ENCODE measurements at regions of chr11 and their contacts with region 1.

Region 1: GRCh38 chr11:93652161-93652597 is 9.3 kb upstream of the CEP295 start:
- DNase-seq: peak; percentile 64
- H3K4me3 Mint-ChIP-seq: no peak overlapping the region
- H3K27ac Mint-ChIP-seq: no peak overlapping the region
- H3K4me1 Mint-ChIP-seq: peaks cover 6% of the 10 kb centered on the region
- H3K27me3 Mint-ChIP-seq: peaks cover 50% of the 10 kb centered on the region
- CTCF ChIP-seq: peak; percentile 59

Region 2: GRCh38 chr11:93324500-93324899 is 327.7 kb before region 1 on chr11:
- CTCF ChIA-PET with region 1: no interaction called
- POLR2A ChIA-PET with region 1: no interaction called
- intact Hi-C with region 1: no loop called
- DNase-seq: no peak
- H3K4me3 Mint-ChIP-seq: no peak overlapping the region
- H3K27ac Mint-ChIP-seq: no peak overlapping the region
- H3K4me1 Mint-ChIP-seq: no peaks in the 10 kb centered on the region
- H3K27me3 Mint-ChIP-seq: no peaks in the 10 kb centered on the region
- CTCF ChIP-seq: no peak

Region 3: GRCh38 chr11:93481701-93482100 is 170.5 kb before region 1 on chr11:
- CTCF ChIA-PET with region 1: interaction called, 5 read pairs
- POLR2A ChIA-PET with region 1: interaction called, 3 read pairs
- intact Hi-C with region 1: loop called (anchors 5 kb)
- DNase-seq: peak; percentile 51
- H3K4me3 Mint-ChIP-seq: no peak overlapping the region
- H3K27ac Mint-ChIP-seq: no peak overlapping the region
- H3K4me1 Mint-ChIP-seq: peaks cover 9% of the 10 kb centered on the region
- H3K27me3 Mint-ChIP-seq: no peaks in the 10 kb centered on the region
- CTCF ChIP-seq: no peak

Region 4: DNA sequence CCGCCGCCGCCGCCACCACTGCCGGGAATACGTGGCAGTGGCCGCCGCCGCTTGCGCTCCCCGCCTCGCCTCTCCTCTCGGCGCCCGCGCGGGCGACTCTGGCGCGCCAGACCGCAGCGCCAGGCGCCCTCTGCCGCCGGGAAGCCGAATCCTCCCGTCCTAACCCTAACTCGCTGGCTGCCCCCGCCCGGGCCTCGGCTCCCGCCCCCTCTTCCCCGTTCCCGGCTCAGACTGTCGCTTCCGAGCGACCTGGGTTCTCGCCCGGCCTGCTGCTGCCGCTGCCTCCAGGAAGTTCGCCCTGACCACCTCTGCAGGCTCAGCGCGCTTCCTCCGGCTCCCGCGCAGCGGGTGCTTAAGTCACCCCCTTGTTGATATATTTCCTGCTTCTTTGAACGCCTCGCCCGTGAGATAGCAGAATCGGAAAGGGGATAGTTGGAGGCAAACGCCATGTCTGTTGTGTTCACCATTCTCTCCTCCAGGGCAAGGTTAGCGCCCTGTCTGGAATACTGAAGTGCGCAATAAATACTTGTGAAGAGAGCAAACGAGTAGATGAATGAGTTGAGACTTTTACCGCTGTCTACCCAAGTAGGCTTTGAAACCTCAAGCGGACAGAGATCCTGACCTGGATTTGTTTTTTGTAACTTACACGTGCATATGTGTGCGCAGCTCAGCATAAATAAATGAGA is 108.7 kb before region 1 on chr11 and contains the start of gene SMCO4:
- CTCF ChIA-PET with region 1: interaction called, 13 read pairs
- POLR2A ChIA-PET with region 1: no interaction called
- intact Hi-C with region 1: loop called (anchors 2 kb)
- DNase-seq: peak; percentile 79
- H3K4me3 Mint-ChIP-seq: peak within 1 kb of the TSS; percentile 79
- H3K27ac Mint-ChIP-seq: peak within 1 kb of the TSS; percentile 57
- H3K4me1 Mint-ChIP-seq: peaks cover 8% of the 10 kb centered on the region
- H3K27me3 Mint-ChIP-seq: peaks cover 11% of the 10 kb centered on the region
- CTCF ChIP-seq: peak; percentile 78
- total RNA-seq, gene SMCO4: 8.5 and 10.0 TPM in 2 replicates

Region 5: DNA sequence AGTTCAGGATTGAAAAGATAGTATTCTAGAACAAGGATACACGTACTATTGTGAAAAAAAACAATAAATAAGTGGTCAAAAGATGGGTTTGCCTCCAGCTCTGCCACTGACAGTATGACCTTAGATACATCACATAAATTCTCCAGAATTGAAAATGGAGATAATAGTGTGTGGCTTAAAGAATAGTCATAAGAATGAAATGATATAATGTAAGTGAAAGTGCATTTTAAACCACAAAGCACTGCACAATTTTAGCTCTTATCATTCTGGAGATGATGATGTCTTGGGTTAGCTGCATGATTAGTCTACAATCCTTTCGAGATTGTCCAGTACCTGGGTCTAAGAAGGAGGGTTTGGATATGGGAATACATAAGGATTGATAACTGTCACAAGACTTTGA is 12.6 kb before region 1 on chr11:
- CTCF ChIA-PET with region 1: interaction called, 32 read pairs
- POLR2A ChIA-PET with region 1: no interaction called
- intact Hi-C with region 1: no loop called
- DNase-seq: no peak
- H3K4me3 Mint-ChIP-seq: no peak overlapping the region
- H3K27ac Mint-ChIP-seq: no peak overlapping the region
- H3K4me1 Mint-ChIP-seq: peaks cover 3% of the 10 kb centered on the region
- H3K27me3 Mint-ChIP-seq: peaks cover 12% of the 10 kb centered on the region
- CTCF ChIP-seq: no peak

Region 6: GRCh38 chr11:93663021-93663420 is 10.8 kb after region 1 on chr11:
- CTCF ChIA-PET with region 1: interaction called, 10 read pairs
- POLR2A ChIA-PET with region 1: no interaction called
- intact Hi-C with region 1: no loop called
- DNase-seq: no peak
- H3K4me3 Mint-ChIP-seq: peak overlapping the region; percentile 80
- H3K27ac Mint-ChIP-seq: peak overlapping the region; percentile 27
- H3K4me1 Mint-ChIP-seq: peaks cover 11% of the 10 kb centered on the region
- H3K27me3 Mint-ChIP-seq: no peaks in the 10 kb centered on the region
- CTCF ChIP-seq: no peak